ENCODE measurements at regions of chr7 and their contacts with region 1.

Region 1: DNA sequence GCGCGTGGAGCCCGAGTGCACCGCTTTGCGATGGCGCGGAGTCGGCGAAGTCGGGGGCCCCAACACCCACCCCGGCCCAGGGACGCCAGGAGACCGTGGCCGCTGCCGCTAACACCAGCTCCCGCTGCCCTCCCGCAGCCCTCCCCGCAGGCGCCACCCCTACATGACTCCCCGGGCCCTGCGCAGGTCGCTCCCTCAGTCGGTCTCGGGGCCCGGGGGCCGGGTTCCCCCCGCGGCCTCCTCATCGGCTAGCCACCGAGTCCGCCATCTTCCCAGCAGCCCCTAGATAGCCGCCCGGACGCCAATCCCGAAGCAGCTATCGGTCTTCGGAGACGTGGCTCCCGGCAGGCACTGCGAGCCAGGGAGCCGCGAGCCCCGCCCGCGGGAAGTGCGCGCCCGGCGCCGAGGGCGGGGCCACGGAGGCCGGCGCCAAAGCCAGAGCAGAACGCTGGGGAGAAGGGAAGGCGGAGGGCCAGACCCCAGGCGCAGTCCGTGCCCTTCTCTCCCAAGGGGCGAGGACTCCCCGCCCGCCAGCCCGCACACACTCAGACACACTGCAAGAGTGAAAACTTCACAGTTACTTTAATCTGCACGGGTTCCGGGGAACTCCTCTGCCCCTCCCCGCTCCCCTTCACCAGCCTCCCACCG is at the start of gene FASTK:
- DNase-seq: peak; percentile 94
- ATAC-seq: peak; percentile 89
- H3K4me3 Mint-ChIP-seq: peak within 1 kb of the TSS; percentile 94
- H3K27ac Mint-ChIP-seq: peak within 1 kb of the TSS; percentile 91
- H3K4me1 Mint-ChIP-seq: peaks cover 43% of the 10 kb centered on the region
- H3K27me3 Mint-ChIP-seq: peaks cover 7% of the 10 kb centered on the region
- total RNA-seq, gene FASTK: 56.6 to 56.7 TPM

Region 2: DNA sequence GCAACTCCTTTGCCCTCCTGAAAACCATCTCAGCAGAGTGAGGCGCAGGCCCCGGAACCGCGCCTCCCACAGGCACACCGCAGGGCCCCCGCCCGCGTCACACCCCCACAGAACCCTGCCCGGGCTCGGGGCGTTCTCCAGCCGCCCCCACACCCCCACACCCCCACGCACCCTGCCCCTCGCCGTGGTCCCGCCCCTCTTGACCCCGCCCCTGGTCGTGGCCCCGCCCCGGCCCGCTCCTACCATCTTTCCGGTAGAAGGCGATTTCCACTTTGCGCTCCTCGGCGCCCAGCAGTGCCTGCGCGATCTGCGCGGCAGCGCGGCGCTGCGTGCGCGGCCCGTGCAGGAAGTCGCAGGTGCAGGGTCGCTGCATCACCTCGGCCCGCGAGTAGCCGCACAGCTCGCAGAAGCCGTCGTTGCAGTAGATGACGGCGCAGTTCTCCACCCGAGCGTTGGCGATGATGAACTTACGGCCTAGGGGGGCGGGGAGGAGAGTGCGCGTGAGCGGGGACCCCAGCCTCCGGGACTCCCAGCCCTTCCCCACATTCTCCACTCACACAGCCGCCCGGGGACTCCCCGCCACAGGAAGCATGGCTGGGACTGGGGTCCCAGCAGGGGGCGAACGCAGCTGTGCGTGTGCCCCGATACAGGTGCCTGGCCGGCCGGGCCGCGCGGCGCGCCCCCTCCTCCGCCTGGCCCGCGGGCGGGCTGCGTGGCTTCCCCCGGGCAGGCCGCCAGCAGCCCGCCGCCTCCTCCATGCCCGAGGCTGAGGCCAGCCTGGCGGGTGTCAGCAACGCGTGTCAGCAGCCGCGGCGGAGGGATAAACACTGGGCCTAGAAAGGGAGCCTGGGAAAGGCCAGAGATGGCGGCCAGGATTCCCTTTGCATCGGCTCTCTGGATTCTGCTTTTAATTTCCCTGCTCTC is 105.9 kb before region 1 on chr7:
- CTCF ChIA-PET with region 1: no interaction called
- POLR2A ChIA-PET with region 1: no interaction called
- intact Hi-C with region 1: loop called in 1 of 2 experiments (anchors 1 kb)
- DNase-seq: peak; percentile 85
- ATAC-seq: peak; percentile 81
- H3K4me3 Mint-ChIP-seq: peak overlapping the region; percentile 73
- H3K27ac Mint-ChIP-seq: peak overlapping the region; percentile 51
- H3K4me1 Mint-ChIP-seq: peaks cover 30% of the 10 kb centered on the region
- H3K27me3 Mint-ChIP-seq: peaks cover 21% of the 10 kb centered on the region

Measured in activated CD4-positive, alpha-beta T cell treated with anti-CD3 and anti-CD28 coated beads for 36 hours (primary cell).